Aorta (tissue), 5 donors: ENCODE measurements at regions of chr17 and their contacts with region 1.

Region 1: GRCh38 chr17:16363749-16364536 is 10.7 kb upstream of the CENPV start:
- DNase-seq: peak; percentile 79 to 89
- ATAC-seq: peak; percentile 89
- H3K4me3 ChIP-seq: no peak overlapping the region
- H3K27ac ChIP-seq: no peak overlapping the region
- H3K4me1 ChIP-seq: no peaks in the 10 kb centered on the region
- H3K27me3 ChIP-seq: no peaks in the 10 kb centered on the region

Region 2: GRCh38 chr17:16415031-16415924 is 51.3 kb after region 1 on chr17 and contains the start of gene TRPV2:
- intact Hi-C with region 1: loop called in 1 of 2 experiments (anchors 10 kb)
- DNase-seq: no peak
- ATAC-seq: no peak
- H3K4me3 ChIP-seq: peak within 1 kb of the TSS; percentile 1 to 3
- H3K27ac ChIP-seq: peak within 1 kb of the TSS in 1 of 2 donors; percentile 20
- H3K4me1 ChIP-seq: no peaks in the 10 kb centered on the region
- H3K27me3 ChIP-seq: no peaks in the 10 kb centered on the region
- total RNA-seq, gene TRPV2: 33.4 to 40.3 TPM